ENCODE measurements at regions of chr1 and their contacts with region 1.

Region 1: GRCh38 chr1:193121616-193122593 is at the start of gene CDC73:
- DNase-seq: peak; percentile 91 to 98
- ATAC-seq: peak; percentile 96 to 97
- H3K4me3 ChIP-seq: peak within 1 kb of the TSS; percentile 71
- H3K27ac ChIP-seq: peak within 1 kb of the TSS; percentile 95 to 96
- H3K4me1 ChIP-seq: peaks cover 20% of the 10 kb centered on the region; the same call in 2 of the 3 replicates
- CTCF ChIP-seq: peak; percentile 74
- EP300 ChIP-seq: no peak
- POLR2A ChIP-seq: peak; percentile 86
- RAD21 ChIP-seq: peak; percentile 87 to 94
- polyA plus RNA-seq, gene CDC73: 53.6 and 77.9 TPM in 2 replicates

Region 2: DNA sequence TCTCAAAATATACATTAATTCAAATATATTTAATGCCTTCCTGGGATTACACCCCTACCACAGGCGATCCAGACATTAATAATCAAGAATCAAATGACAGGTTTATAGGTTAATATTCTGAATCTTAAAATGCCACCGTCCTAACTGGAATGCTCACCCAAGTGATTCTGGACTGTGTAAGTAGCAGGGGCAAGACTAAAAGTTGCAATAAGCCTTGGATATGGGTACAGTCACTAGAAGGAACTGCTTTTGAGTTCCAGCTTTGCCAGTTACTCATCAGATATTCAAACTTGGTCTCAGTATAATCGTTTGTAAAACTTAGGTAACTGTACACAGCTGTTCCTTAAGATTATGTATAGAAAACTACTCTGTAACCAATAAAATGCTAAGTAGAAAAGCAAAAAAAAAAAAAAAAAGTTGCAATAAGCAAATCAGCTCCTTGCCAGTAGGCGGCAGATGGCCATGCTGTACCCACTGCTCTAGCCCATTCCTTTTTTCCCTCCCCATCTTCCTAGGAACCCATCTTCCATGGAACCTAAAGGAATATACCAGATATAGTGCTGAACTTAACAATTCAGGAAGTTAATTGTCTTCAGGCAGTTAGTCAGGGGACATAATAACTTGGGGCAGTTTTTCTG is 52.0 kb before region 1 on chr1:
- CTCF ChIA-PET with region 1: interaction called, 14 read pairs
- POLR2A ChIA-PET with region 1: interaction called, 4 read pairs
- DNase-seq: peak; percentile 39 to 68
- ATAC-seq: peak; percentile 95
- H3K4me3 ChIP-seq: no peak overlapping the region
- H3K27ac ChIP-seq: no peak overlapping the region
- H3K4me1 ChIP-seq: no peaks in the 10 kb centered on the region
- CTCF ChIP-seq: peak; percentile 43
- EP300 ChIP-seq: no peak
- POLR2A ChIP-seq: no peak
- RAD21 ChIP-seq: peak; percentile 31 to 48; a peak in 3 of 5 replicates

Region 3: GRCh38 chr1:193104906-193105820 is 16.7 kb before region 1 on chr1 and contains the start of gene GLRX2:
- CTCF ChIA-PET with region 1: interaction called, 66 read pairs
- POLR2A ChIA-PET with region 1: interaction called, 38 read pairs
- DNase-seq: peak; percentile 88 to 89
- ATAC-seq: peak; percentile 90 to 96
- H3K4me3 ChIP-seq: peak within 1 kb of the TSS; percentile 67
- H3K27ac ChIP-seq: peak within 1 kb of the TSS; percentile 76 to 96
- H3K4me1 ChIP-seq: peaks cover 17% of the 10 kb centered on the region; the same call in 2 of the 3 replicates
- CTCF ChIP-seq: no peak
- EP300 ChIP-seq: no peak
- POLR2A ChIP-seq: peak; percentile 78
- RAD21 ChIP-seq: peak; percentile 51 to 64
- polyA plus RNA-seq, gene GLRX2: 33.5 and 64.8 TPM in 2 replicates

Region 4: GRCh38 chr1:193111641-193112090 is 10.2 kb before region 1 on chr1:
- CTCF ChIA-PET with region 1: interaction called, 63 read pairs
- POLR2A ChIA-PET with region 1: interaction called, 38 read pairs
- DNase-seq: peak in 1 of 2 experiments; percentile 57
- ATAC-seq: peak; percentile 21 to 68; a peak in 3 of 6 replicates
- H3K4me3 ChIP-seq: no peak overlapping the region
- H3K27ac ChIP-seq: peak overlapping the region; percentile 73 to 86
- H3K4me1 ChIP-seq: peaks cover 55% of the 10 kb centered on the region
- CTCF ChIP-seq: no peak
- EP300 ChIP-seq: no peak
- POLR2A ChIP-seq: no peak
- RAD21 ChIP-seq: no peak